HEK293 (cell line): ENCODE measurements at regions of chr6 and their contacts with region 1.

Region 1: GRCh38 chr6:15062516-15063252 is 183.2 kb upstream of the JARID2 start:
- H3K4me3 ChIP-seq: no peak overlapping the region
- H3K27ac ChIP-seq: peak overlapping the region; percentile 8; the same call in 1 of the 2 replicates
- H3K4me1 ChIP-seq: peaks cover 5% of the 10 kb centered on the region; the same call in 1 of the 2 replicates
- CTCF ChIP-seq: no peak

Region 2: GRCh38 chr6:15207923-15208322 is 145.2 kb after region 1 on chr6:
- CTCF ChIA-PET with region 1: no interaction called
- POLR2A ChIA-PET with region 1: no interaction called
- H3K4me3 ChIP-seq: no peak overlapping the region
- H3K27ac ChIP-seq: no peak overlapping the region
- H3K4me1 ChIP-seq: no peaks in the 10 kb centered on the region
- CTCF ChIP-seq: no peak

Region 3: DNA sequence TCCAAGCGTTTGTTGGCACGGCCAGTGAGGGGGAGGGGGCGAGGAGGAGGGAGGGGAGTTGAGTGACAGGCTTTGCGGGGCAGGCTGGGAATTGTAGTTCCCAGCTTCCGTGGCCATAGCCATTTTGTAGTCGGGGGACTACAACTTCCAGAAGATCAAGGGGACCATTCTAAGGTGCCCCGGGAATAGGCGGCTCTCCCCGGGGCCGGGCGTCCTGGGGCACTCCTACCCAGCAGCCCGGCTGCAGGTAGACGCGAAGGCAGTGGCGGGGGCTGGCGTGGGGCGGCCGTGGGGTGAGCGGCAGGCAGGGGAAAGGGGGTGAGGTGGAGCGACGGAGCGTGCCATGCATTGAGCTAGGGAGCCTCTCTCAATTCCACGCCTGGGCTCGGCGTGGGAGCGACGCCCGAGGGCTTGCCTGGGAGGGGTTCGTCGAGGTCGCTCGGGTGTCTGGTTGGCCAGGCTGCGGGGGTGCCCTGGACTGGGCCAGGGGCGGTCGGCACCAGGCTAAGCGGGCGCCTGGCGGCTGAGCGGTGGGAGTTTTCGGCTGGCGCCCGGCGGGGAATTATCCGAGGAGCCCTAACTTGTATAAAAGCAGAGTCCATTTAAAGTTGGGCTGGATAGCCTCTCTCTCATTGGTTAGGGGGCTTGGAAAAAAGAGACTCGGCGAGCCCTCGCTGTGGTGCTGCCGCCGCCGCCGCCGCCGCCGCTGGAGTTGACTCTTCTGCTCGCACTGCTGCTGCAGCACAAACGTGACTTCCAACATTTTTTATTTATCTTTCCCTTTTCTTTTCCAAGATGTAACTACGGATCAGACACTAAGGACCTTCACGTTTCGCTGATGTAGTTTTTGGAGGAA is 182.9 kb after region 1 on chr6 and contains the start of gene JARID2:
- CTCF ChIA-PET with region 1: no interaction called
- POLR2A ChIA-PET with region 1: interaction called, 10 read pairs
- H3K4me3 ChIP-seq: peak within 1 kb of the TSS; percentile 96
- H3K27ac ChIP-seq: peak within 1 kb of the TSS; percentile 97
- H3K4me1 ChIP-seq: peaks cover 9% of the 10 kb centered on the region
- CTCF ChIP-seq: peak; percentile 25; the same call in 1 of the 2 replicates